Ascending aorta (tissue), 2 donors: ENCODE measurements at regions of chr14 and their contacts with region 1.

Region 1: DNA sequence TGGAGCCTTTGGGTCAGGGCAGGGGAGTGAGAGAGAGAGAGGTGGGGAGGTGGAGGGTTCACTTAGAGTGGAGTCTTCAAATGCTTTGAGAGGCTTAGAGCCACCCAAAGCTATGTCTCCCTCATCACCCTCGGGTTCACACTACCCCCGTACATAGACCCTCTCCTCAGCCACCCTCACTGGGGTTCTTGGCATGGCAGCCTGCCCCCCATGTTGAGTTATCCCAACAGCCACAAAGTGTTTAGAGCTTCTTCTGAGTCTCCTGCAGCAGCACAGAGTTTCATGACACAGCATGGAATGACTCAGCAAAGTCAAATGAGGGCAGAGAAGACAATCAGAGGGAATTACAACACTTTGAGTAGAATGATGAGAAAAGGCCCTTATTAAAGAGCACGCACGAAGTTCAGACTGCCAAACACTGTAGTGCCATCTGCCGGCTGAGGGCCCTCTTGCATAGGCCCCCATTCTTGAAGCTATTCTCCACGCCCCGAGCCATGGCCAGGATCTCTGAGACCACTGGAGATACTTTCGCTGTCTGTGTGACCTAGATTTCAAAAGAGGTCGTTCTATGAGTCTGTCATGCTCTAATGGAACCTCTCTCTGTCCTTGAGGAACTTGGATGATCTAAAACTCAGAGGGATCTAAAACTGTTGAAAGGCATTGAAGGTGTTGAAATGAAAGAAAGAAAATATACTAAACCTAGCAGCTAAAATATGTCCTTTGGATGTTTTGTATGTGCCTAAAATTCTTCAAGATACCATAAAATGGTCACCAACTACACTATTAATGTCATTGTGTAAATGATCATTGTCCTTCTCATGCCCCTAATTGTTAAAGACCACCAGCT is 221.9 kb downstream of the PELI2 start:
- DNase-seq: peak; percentile 19 to 87
- H3K4me3 ChIP-seq: no peak overlapping the region
- H3K27ac ChIP-seq: peak overlapping the region; percentile 42 to 51
- H3K4me1 ChIP-seq: peaks cover 2 to 31% of the 10 kb centered on the region in 2 donors
- H3K27me3 ChIP-seq: no peaks in the 10 kb centered on the region
- CTCF ChIP-seq: peak; percentile 60 to 79 (median 70)

Region 2: DNA sequence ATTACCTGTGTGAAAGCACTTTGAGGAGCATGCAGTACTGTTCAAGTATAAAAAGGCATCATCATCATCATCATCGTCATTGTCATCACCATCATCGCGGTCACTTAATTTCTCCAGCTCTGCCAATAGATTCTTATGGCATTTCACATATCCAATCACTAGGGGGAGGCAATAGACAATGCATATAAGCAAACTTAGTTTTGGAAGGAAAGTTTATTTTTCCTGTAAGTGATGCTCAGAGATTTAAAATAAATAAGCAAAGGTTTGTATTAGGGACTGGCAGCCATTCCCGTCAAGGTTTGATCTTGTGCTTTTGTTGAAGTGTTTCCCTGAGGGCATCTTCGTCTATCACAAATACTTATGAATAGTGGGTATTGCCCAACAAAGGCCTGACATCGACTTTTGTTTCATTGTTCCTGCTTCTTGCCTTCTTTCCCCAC is 632.7 kb before region 1 on chr14:
- intact Hi-C with region 1: loop called (anchors 5 kb)
- DNase-seq: no peak
- H3K4me3 ChIP-seq: no peak overlapping the region
- H3K27ac ChIP-seq: no peak overlapping the region
- H3K4me1 ChIP-seq: no peaks in the 10 kb centered on the region
- H3K27me3 ChIP-seq: no peaks in the 10 kb centered on the region
- CTCF ChIP-seq: peak; percentile 59 to 67 (median 64)

Region 3: GRCh38 chr14:56378475-56378877 is 38.4 kb after region 1 on chr14:
- intact Hi-C with region 1: loop called (anchors 2 kb)
- DNase-seq: peak in 1 of 2 donors; percentile 74
- H3K4me3 ChIP-seq: peak overlapping the region in 1 of 2 donors; percentile 30
- H3K27ac ChIP-seq: peak overlapping the region; percentile 76 to 85
- H3K4me1 ChIP-seq: peaks cover 5 to 23% of the 10 kb centered on the region in 2 donors
- H3K27me3 ChIP-seq: no peaks in the 10 kb centered on the region
- CTCF ChIP-seq: no peak